ENCODE measurements at regions of chr10 and their contacts with region 1.

Region 1: DNA sequence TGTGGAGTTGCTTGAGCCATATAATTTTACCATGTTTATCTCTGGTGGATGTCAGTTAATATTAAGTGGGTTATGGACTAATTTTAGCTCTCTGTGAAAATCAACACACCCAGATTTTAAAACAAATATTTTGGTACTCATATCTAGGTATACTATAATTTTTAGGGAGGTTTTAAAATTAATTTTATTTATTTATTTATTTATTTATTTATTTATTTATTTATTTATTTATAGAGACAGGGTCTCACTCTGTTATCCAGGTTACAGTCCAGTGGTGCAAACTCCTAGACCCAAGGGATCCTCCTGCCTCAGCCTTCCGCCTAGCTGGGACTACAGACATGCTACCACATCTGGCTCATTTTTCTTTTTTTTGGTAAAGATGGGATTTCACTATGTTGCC is 7.3 kb upstream of the CREM start:
- DNase-seq: no peak
- ATAC-seq: no peak
- H3K4me3 Mint-ChIP-seq: no peak overlapping the region
- H3K27ac Mint-ChIP-seq: no peak overlapping the region
- H3K4me1 Mint-ChIP-seq: peaks cover 15% of the 10 kb centered on the region
- H3K27me3 Mint-ChIP-seq: no peaks in the 10 kb centered on the region
- CTCF ChIP-seq: no peak

Region 2: DNA sequence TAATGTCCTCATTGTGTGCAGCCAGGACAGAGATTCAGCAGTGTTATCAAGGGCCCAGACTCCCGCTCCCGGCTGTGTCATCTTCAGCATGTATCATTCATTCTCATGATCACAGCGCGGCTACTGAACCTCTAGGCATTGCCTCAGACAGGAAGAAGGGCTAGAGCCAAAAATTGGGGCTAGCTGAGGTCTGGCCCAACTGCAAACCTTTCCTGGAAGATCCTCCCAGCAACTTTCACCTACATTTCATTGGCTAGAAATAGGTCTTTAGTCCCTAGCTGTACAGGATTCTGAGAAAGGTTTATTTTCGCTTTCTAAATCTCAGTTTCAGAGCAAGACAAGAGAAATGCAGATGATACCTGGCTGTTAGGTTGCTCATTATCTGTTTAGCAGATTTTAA is 89.2 kb after region 1 on chr10:
- CTCF ChIA-PET with region 1: interaction called, 255 read pairs
- POLR2A ChIA-PET with region 1: no interaction called
- intact Hi-C with region 1: no loop called
- DNase-seq: peak; percentile 81
- ATAC-seq: peak; percentile 92
- H3K4me3 Mint-ChIP-seq: peak overlapping the region; percentile 53
- H3K27ac Mint-ChIP-seq: peak overlapping the region; percentile 88
- H3K4me1 Mint-ChIP-seq: peaks cover 29% of the 10 kb centered on the region
- H3K27me3 Mint-ChIP-seq: no peaks in the 10 kb centered on the region
- CTCF ChIP-seq: no peak

Region 3: DNA sequence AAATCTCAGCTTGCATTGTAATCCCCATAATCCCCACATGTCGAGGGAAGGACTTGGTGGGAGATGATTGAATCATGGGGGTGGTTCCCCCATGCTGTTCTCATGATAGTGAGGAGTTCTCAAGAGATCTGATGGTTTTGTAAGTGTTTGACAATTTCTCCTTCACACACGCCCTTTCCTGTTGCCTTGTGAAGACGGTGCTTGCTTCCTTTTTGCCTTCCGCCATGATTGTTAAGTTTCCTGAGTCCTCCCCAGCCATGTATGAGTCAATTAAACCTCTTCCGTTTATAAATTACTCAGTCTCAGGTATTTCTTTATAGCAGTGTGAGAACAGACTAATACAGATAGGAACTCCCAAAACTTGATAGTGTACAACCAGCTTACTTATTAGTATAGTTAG is 105.8 kb after region 1 on chr10:
- CTCF ChIA-PET with region 1: interaction called, 255 read pairs
- POLR2A ChIA-PET with region 1: no interaction called
- intact Hi-C with region 1: no loop called
- DNase-seq: no peak
- ATAC-seq: peak; percentile 58
- H3K4me3 Mint-ChIP-seq: no peak overlapping the region
- H3K27ac Mint-ChIP-seq: no peak overlapping the region
- H3K4me1 Mint-ChIP-seq: peaks cover 10% of the 10 kb centered on the region
- H3K27me3 Mint-ChIP-seq: no peaks in the 10 kb centered on the region
- CTCF ChIP-seq: no peak

Region 4: GRCh38 chr10:35231646-35232045 is 112.3 kb after region 1 on chr10:
- CTCF ChIA-PET with region 1: interaction called, 11 read pairs
- POLR2A ChIA-PET with region 1: no interaction called
- intact Hi-C with region 1: no loop called
- DNase-seq: no peak
- ATAC-seq: no peak
- H3K4me3 Mint-ChIP-seq: no peak overlapping the region
- H3K27ac Mint-ChIP-seq: no peak overlapping the region
- H3K4me1 Mint-ChIP-seq: no peaks in the 10 kb centered on the region
- H3K27me3 Mint-ChIP-seq: no peaks in the 10 kb centered on the region
- CTCF ChIP-seq: no peak

Region 5: DNA sequence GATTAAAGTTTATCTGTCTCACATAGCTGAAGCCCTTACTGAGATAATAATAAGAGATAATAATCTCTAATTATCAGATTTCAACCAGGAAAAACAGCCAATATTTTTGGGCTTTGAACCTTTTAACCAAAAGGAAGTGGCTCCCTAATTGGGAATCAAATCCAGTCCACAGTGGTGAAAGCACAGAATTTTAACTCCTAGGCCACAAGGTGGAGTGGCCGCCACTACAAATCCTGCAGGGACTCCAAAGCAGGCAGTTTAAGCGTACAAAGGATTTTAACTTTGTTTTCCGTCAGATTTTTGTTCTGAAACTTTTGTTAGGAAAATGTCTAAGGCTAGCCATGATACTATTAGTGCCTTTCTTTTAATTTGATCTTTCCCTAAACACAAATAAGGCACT is 117.4 kb after region 1 on chr10:
- CTCF ChIA-PET with region 1: interaction called, 17 read pairs
- POLR2A ChIA-PET with region 1: no interaction called
- intact Hi-C with region 1: no loop called
- DNase-seq: no peak
- ATAC-seq: no peak
- H3K4me3 Mint-ChIP-seq: no peak overlapping the region
- H3K27ac Mint-ChIP-seq: no peak overlapping the region
- H3K4me1 Mint-ChIP-seq: no peaks in the 10 kb centered on the region
- H3K27me3 Mint-ChIP-seq: no peaks in the 10 kb centered on the region
- CTCF ChIP-seq: no peak

Region 6: DNA sequence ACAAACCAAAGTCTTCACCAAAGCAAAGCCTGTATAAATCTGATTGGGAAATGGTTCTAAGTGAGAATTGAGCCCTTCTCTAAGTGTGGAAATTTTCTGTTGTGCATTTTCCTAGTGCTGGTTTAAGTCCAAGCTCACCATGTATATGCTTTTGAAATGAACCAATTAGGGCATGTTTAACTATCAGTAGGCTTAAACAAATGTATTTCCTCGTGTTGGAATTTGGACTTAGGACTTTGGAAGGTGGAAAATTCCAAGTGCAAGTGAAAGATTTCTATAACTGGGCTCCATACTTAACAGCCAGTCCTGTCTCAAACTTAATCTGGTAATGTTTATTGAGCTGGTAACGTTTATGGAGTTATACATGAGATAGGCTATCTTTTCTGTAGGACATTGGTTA is 245.4 kb after region 1 on chr10:
- CTCF ChIA-PET with region 1: no interaction called
- POLR2A ChIA-PET with region 1: no interaction called
- intact Hi-C with region 1: no loop called
- DNase-seq: no peak
- ATAC-seq: no peak
- H3K4me3 Mint-ChIP-seq: no peak overlapping the region
- H3K27ac Mint-ChIP-seq: no peak overlapping the region
- H3K4me1 Mint-ChIP-seq: peaks cover 56% of the 10 kb centered on the region
- H3K27me3 Mint-ChIP-seq: no peaks in the 10 kb centered on the region
- CTCF ChIP-seq: no peak

Region 7: DNA sequence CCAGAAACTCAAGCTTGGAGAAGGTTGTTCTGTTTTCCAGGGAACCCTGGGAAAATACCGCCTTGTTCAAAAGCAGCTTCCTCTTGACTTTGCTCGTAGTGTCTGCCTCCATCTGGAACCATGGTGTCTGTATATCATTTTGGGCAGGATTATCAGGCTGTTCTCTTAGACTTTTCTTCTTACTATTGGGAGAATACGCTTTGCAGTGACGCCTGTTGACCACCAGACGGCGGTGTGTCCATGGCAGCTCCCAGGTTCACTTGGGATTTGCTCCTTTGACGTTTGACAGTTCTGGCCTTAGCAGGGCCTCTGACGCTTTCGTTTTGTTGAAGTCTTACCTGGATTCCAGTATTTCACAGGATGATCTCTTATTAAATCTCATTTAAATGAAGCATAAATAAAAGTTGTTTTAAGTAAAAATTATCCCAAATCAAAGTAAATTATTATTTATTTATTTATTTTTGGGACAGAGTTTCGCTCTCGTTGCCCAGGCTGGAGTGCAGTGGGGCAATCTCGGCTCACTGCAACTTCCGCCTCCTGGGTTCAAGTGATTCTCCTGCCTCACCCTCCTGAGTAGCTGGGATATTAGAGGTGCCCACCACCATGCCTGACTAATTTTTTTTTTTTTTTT is 444.0 kb after region 1 on chr10:
- CTCF ChIA-PET with region 1: interaction called, 12 read pairs
- POLR2A ChIA-PET with region 1: no interaction called
- intact Hi-C with region 1: no loop called
- DNase-seq: peak; percentile 57
- ATAC-seq: peak; percentile 82
- H3K4me3 Mint-ChIP-seq: no peak overlapping the region
- H3K27ac Mint-ChIP-seq: peak overlapping the region; percentile 59
- H3K4me1 Mint-ChIP-seq: peaks cover 8% of the 10 kb centered on the region
- H3K27me3 Mint-ChIP-seq: no peaks in the 10 kb centered on the region
- CTCF ChIP-seq: peak; percentile 98